Sigmoid colon (tissue), 7 donors: ENCODE measurements at regions of chr9 and their contacts with region 1.

Region 1: GRCh38 chr9:76835571-76836283 is 70.2 kb downstream of the PRUNE2 start:
- DNase-seq: peak; percentile 79
- H3K4me3 ChIP-seq: peak overlapping the region in 3 of 4 donors; percentile 12 to 25 (median 16)
- H3K27ac ChIP-seq: peak overlapping the region; percentile 86 to 94 (median 88)
- H3K4me1 ChIP-seq: peaks cover 0 to 68% (median 43%) of the 10 kb centered on the region in 4 donors
- H3K27me3 ChIP-seq: no peaks in the 10 kb centered on the region
- CTCF ChIP-seq: no peak
- EP300 ChIP-seq: peak; percentile 69 to 93 (median 80)
- POLR2A ChIP-seq: peak in 1 of 2 donors; percentile 61

Region 2: GRCh38 chr9:76873056-76873792 is 37.5 kb after region 1 on chr9:
- intact Hi-C with region 1: loop called (anchors 5 kb)
- DNase-seq: peak; percentile 70
- H3K4me3 ChIP-seq: peak overlapping the region in 1 of 4 donors; percentile 12
- H3K27ac ChIP-seq: peak overlapping the region; percentile 77 to 95 (median 87)
- H3K4me1 ChIP-seq: peaks cover 0 to 87% (median 63%) of the 10 kb centered on the region in 4 donors
- H3K27me3 ChIP-seq: no peaks in the 10 kb centered on the region
- CTCF ChIP-seq: no peak
- EP300 ChIP-seq: no peak
- POLR2A ChIP-seq: no peak

Region 3: DNA sequence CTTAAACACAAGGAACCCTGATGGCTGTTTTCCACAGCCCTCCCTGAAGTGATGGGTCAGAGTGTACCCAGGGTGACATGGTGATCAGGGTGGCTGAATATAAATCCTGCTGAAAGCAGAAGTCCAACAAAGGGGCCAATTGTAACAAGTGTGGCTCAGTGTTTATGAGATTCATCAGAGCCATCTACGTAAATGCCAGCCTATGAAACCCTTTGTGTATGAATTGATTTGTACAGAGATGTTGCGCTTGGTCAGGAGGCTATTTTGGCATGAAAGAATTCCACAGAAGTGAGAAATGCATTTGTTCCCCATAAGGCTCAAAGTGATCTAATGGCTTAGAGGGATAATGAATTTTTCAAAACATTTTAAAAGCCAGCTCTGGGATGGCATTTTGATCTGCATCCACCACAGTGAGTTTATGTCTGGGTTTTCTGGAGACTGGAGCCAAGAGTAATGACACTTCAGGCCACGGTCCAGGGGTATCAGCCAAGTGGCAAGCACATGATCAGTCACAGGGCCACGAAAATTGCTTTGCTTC is 57.7 kb after region 1 on chr9:
- intact Hi-C with region 1: loop called (anchors 2 kb)
- DNase-seq: peak; percentile 88
- H3K4me3 ChIP-seq: no peak overlapping the region
- H3K27ac ChIP-seq: peak overlapping the region; percentile 87 to 95 (median 88)
- H3K4me1 ChIP-seq: peaks cover 0 to 88% (median 61%) of the 10 kb centered on the region in 4 donors
- H3K27me3 ChIP-seq: no peaks in the 10 kb centered on the region
- CTCF ChIP-seq: no peak
- EP300 ChIP-seq: peak; percentile 92 to 98 (median 96)
- POLR2A ChIP-seq: no peak